PC-3 (cell line): ENCODE measurements at regions of chr1 and their contacts with region 1.

Region 1: DNA sequence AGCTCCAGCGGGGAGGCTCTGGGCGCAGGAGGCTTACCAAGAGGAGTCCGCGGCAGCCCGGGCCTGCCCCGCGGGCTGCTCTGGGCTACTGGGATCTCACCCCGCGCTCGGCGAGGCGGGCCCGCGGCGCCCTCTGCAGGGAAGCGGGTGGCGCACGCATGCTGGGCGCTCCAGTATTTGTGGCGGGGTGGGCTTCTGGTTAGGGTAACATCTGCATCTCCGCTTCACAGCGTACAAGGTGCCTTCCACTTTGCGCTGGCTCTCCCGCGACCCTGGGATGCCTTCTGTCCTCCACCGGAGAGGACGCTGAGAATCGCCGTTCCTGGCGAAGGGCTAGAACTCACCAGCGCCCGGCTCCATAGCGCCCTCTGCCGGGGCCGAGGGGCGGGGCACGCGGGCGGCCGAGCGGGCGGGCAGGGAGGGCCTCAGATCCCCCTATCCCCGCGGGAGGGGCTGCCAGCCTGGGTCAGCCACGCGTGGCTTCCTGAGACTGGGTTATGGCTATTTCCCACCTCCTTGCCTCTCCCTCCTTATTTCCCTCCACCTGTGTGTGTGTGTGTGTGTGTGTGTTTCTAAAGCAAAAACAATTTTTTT is 46.6 kb upstream of the CTBS start:
- DNase-seq: peak; percentile 84
- ATAC-seq: peak; percentile 83
- H3K4me3 ChIP-seq: peak overlapping the region; percentile 81
- H3K27ac ChIP-seq: peak overlapping the region; percentile 84
- H3K4me1 ChIP-seq: peaks cover 24% of the 10 kb centered on the region
- H3K27me3 ChIP-seq: no peaks in the 10 kb centered on the region
- CTCF ChIP-seq: peak; percentile 98

Region 2: DNA sequence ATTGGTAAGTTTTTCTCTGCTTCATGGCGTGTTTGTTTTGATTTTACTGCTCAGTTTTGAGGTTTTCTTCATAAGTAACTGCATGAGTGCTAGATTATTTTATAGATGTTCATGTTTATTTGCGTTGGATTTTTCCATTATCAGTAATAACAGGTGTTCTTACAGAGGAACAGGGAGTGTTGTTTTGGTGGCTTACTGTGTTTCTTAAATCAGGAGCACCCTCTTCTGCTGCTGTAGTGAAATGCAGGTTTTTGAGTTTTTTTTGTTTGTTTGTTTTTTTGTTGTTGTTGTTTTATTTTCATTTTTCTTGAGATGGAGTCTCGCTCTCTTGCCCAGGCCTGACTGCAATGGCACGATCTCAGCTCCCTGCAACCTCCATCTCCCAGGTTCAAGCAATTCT is 79.1 kb before region 1 on chr1:
- CTCF ChIA-PET with region 1: no interaction called
- POLR2A ChIA-PET with region 1: no interaction called
- intact Hi-C with region 1: loop called (anchors 2 kb)
- DNase-seq: peak; percentile 14
- ATAC-seq: no peak
- H3K4me3 ChIP-seq: no peak overlapping the region
- H3K27ac ChIP-seq: no peak overlapping the region
- H3K4me1 ChIP-seq: peaks cover 16% of the 10 kb centered on the region
- H3K27me3 ChIP-seq: no peaks in the 10 kb centered on the region
- CTCF ChIP-seq: peak; percentile 65